K562 (cell line): ENCODE measurements at regions of chr11 and their contacts with region 1.

Region 1: GRCh38 chr11:58900479-58901420 is 38.5 kb upstream of the GLYATL1 start:
- DNase-seq: peak; percentile 59 to 82 (median 72)
- ATAC-seq: peak; percentile 98
- H3K4me3 ChIP-seq: no peak overlapping the region
- H3K27ac ChIP-seq: no peak overlapping the region
- H3K4me1 ChIP-seq: peaks cover 0 to 5% of the 10 kb centered on the region in 2 experiments; a peak in 2 of 5 replicates
- H3K27me3 ChIP-seq: peaks cover 3 to 7% of the 10 kb centered on the region in 2 experiments; a peak in 2 of 5 replicates
- CTCF ChIP-seq: peak; percentile 73 to 88 (median 86)
- EP300 ChIP-seq: no peak
- POLR2A ChIP-seq: no peak
- RAD21 ChIP-seq: peak; percentile 87 to 89

Region 2: DNA sequence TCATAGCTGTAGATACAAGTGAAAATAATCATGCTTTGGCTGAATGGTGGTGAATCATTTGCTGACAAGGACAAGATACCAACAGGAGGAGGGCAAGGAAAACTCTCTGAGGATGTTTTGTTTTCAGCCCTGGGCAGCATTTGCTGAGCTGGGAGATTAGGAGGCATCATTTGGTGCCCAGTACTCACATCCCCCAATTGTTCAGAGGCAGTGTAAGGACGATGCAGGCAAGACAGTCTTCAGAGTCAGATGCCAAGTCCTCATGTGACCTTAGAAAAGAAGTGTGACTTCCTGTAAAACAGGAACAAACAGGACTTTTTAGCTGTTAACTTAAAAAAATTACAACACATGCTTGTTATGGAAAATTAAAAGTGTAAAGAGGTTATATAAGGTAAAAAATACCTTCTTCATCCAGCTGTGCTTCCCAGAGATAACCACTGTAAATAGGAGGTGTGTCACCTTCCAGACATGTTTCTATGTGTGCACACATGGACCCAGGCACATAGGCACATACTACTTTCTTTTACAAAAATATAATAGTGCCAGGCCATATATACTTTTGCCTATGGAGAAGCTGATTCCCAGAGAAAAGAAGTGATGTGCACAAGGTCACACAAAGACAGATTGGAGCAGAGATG is 260.2 kb before region 1 on chr11:
- CTCF ChIA-PET with region 1: no interaction called
- POLR2A ChIA-PET with region 1: no interaction called
- in situ Hi-C with region 1: loop called (anchors 5 kb)
- intact Hi-C with region 1: loop called (anchors 2 kb)
- DNase-seq: no peak
- ATAC-seq: no peak
- H3K4me3 ChIP-seq: no peak overlapping the region
- H3K27ac ChIP-seq: no peak overlapping the region
- H3K4me1 ChIP-seq: peaks cover 0 to 9% of the 10 kb centered on the region in 2 experiments; a peak in 3 of 5 replicates
- H3K27me3 ChIP-seq: no peaks in the 10 kb centered on the region
- CTCF ChIP-seq: no peak
- EP300 ChIP-seq: no peak
- POLR2A ChIP-seq: no peak
- RAD21 ChIP-seq: no peak